Keratinocyte (primary cell): ENCODE measurements at regions of chr10 and their contacts with region 1.

Region 1: DNA sequence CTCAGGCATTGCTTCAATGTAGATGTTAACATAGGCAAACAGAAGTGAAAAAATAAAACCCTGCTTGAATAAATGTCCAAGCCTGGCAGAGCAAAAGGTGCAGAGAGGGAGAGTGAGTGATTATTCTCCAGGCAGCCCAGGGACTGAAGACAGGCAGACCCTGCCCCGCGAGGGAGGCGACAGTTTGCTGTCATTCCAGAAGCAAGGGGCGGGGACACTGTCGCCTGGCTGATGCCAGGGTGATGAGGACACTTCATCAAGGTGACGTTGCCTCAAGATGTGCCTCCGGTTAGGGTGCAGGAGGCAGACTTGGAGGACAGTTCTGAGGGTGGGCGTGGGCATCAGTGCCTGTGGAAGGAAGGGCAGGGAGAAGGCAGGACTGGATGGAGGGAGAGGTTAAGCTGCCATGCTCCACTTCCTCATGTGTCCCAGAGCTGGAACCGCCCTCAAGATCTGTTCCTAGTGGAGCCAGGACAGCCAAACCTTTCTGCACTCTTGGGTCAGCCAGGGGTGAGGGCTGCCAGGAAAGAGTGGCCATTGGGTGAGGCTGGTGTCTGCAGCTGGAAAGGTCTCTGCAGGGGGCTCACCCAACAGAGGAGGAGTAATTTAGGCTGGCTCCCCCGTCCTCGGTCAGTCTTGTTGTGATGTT is 560.5 kb upstream of the MKI67 start:
- DNase-seq: no peak
- H3K4me3 ChIP-seq: no peak overlapping the region
- H3K27ac ChIP-seq: no peak overlapping the region
- H3K4me1 ChIP-seq: no peaks in the 10 kb centered on the region
- H3K27me3 ChIP-seq: no peaks in the 10 kb centered on the region
- CTCF ChIP-seq: no peak

Region 2: DNA sequence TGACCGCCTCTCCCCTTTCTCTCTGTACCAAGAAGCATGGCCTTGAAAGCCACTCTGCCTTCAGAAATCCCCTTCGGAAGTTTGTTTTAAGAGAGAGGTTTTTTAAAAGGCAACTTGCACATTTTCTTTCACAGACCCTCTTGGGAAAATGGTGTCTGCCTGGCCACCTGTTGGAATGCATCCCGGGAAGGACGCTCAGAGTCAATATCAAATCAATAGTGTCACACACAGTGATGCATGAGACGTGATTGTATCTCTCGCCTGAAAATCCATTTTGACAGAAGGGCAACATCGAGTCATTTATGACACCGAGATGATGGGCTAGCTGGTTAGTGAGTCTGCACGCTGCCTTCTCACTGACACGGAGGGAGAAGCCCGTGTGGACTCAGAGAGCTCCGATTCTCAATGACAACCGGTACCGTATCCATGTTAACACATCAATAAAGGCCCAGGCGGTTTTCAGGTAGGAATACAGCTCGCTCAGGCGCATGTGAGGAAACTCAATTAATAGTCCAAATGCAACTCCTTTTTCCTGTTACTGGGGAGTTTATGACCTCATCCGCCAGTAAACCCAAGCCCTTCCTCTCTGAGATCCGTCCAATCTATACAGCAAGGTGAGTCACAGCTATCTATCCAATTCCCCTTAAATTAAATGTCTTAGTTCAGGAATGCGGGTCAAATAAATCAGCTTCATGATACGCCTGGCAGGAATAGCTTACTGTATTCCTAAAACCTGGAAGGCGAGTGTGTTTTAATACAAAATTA is 61.0 kb after region 1 on chr10:
- dilution Hi-C with region 1: loop called (anchors 5 kb)
- DNase-seq: no peak
- H3K4me3 ChIP-seq: no peak overlapping the region
- H3K27ac ChIP-seq: no peak overlapping the region
- H3K4me1 ChIP-seq: no peaks in the 10 kb centered on the region
- H3K27me3 ChIP-seq: no peaks in the 10 kb centered on the region
- CTCF ChIP-seq: no peak